CD4-positive, alpha-beta T cell (primary cell): ENCODE measurements at regions of chr12 and their contacts with region 1.

Region 1: DNA sequence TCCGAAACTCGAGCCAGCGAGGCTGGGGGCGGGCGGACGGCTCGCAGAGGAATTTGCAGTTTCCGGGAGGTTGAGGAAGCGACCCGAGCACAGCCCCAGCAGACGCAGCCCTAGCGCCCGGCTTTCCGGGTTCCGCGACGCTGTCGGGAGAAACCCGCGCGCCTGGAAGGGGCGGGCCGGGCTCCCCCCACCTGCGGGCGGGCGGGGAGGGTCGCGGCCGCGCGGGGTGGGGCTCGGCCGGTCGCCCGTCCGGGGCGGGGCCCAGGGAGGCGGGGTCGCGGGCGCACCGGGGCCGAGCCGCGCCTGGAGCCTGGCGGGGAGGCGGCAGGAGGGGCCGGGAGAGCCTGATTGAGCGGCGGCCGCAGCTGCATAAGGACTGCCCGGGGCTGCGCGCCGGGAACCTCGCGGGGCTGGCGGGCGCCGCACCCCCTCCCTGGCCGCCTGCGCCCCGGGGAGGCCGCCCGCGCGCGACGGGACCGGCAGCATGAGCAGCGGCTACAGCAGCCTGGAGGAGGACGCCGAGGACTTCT is at the start of gene RASSF3:
- DNase-seq: peak; percentile 46 to 92 (median 76)
- ATAC-seq: peak; percentile 57
- H3K4me3 ChIP-seq: peak within 1 kb of the TSS; percentile 87
- H3K4me3 Mint-ChIP-seq: peak within 1 kb of the TSS; percentile 98
- H3K27ac ChIP-seq: peak within 1 kb of the TSS; percentile 69 to 86
- H3K27ac Mint-ChIP-seq: peak within 1 kb of the TSS; percentile 93
- H3K4me1 ChIP-seq: peaks cover 38% of the 10 kb centered on the region
- H3K4me1 Mint-ChIP-seq: peaks cover 44% of the 10 kb centered on the region
- H3K27me3 ChIP-seq: no peaks in the 10 kb centered on the region
- H3K27me3 Mint-ChIP-seq: no peaks in the 10 kb centered on the region
- CTCF ChIP-seq: no peak
- total RNA-seq, gene RASSF3: 118 to 127 TPM

Region 2: DNA sequence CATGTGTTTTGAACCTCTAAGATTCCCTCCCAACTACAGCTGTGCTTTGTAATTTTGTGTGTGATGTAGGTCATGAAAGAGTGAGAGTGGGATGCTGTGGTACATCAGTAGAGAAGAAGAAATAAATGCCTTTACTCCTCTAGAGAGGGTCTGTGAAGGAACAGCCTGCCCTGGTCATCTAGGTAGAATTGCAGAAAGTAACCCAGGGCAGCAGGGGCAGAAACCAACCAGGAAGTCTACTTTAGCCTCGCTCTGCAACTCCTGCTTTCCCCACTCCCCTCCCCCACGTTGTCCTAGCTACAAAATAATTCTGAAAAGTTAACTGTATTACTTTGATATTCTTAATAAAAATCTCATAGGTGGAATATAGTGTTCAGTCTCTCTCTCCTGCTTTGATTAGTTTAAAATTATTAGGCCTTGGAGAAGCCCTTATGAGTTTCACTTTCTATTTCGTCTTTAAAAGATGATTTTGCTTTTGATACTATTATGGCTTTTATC is 150.8 kb before region 1 on chr12:
- CTCF ChIA-PET with region 1: no interaction called
- POLR2A ChIA-PET with region 1: no interaction called
- intact Hi-C with region 1: loop called in 1 of 2 experiments (anchors 5 kb)
- DNase-seq: peak in 3 of 14 experiments; percentile 43 to 55 (median 54)
- ATAC-seq: peak; percentile 51
- H3K4me3 ChIP-seq: peak overlapping the region; percentile 59
- H3K4me3 Mint-ChIP-seq: peak overlapping the region; percentile 90
- H3K27ac ChIP-seq: peak overlapping the region; percentile 54 to 77
- H3K27ac Mint-ChIP-seq: peak overlapping the region; percentile 91
- H3K4me1 ChIP-seq: peaks cover 22% of the 10 kb centered on the region
- H3K4me1 Mint-ChIP-seq: peaks cover 44% of the 10 kb centered on the region
- H3K27me3 ChIP-seq: no peaks in the 10 kb centered on the region
- H3K27me3 Mint-ChIP-seq: no peaks in the 10 kb centered on the region
- CTCF ChIP-seq: no peak

Region 3: DNA sequence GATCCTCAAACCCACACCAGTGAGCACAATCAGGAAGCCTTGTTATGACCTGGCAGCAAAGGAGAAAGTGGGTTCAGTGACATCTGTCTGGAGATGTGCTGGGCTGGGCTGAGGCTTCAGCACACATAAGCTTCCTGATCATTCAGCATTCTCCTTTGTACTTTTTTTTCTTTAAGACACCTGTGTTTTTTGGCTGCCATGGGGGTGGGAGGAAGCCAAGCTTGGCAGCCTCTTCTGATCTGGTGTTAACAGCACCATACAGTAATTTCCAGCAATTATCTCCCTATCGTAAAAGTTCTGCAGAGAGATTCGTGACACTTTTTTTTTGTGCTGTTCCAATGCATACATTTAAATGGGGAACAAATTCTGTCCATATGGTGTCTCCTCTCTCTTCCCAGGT is 38.8 kb before region 1 on chr12:
- CTCF ChIA-PET with region 1: no interaction called
- POLR2A ChIA-PET with region 1: interaction called, 32 read pairs
- intact Hi-C with region 1: no loop called
- DNase-seq: peak in 7 of 14 experiments; percentile 4 to 46 (median 20)
- ATAC-seq: peak; percentile 88
- H3K4me3 ChIP-seq: no peak overlapping the region
- H3K4me3 Mint-ChIP-seq: no peak overlapping the region
- H3K27ac ChIP-seq: no peak overlapping the region
- H3K27ac Mint-ChIP-seq: peak overlapping the region; percentile 45
- H3K4me1 ChIP-seq: peaks cover 31% of the 10 kb centered on the region
- H3K4me1 Mint-ChIP-seq: peaks cover 58% of the 10 kb centered on the region
- H3K27me3 ChIP-seq: no peaks in the 10 kb centered on the region
- H3K27me3 Mint-ChIP-seq: no peaks in the 10 kb centered on the region
- CTCF ChIP-seq: no peak

Region 4: DNA sequence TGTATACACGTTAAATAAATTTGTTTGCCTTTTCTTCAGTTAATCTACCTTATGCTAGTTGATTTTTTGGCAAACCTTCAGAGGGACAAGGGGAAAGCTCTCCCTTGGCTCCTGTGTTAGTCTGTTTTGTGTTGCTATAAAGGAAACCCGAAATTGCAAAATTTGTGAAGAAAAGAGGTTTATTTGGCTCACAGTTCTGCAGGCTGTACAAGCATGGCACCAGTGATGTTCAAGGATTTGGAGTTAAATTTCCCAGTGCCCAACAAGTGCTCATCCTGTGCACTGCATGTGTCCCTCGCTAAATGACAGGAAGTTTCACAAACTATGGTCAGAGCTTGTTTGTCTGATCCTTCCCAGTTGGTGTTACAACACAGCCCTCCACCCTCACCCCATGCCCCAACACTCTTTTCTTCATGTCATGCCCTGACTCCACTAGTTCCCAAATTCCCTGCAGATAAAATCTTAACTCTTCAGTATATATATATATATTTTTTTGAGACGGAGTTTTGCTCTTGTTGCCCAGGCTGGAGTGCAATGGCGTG is 13.9 kb before region 1 on chr12:
- CTCF ChIA-PET with region 1: interaction called, 3 read pairs
- POLR2A ChIA-PET with region 1: interaction called, 23 read pairs
- intact Hi-C with region 1: loop called in 1 of 2 experiments (anchors 1 kb)
- DNase-seq: no peak
- ATAC-seq: no peak
- H3K4me3 ChIP-seq: no peak overlapping the region
- H3K4me3 Mint-ChIP-seq: no peak overlapping the region
- H3K27ac ChIP-seq: no peak overlapping the region
- H3K27ac Mint-ChIP-seq: no peak overlapping the region
- H3K4me1 ChIP-seq: peaks cover 31% of the 10 kb centered on the region
- H3K4me1 Mint-ChIP-seq: peaks cover 54% of the 10 kb centered on the region
- H3K27me3 ChIP-seq: no peaks in the 10 kb centered on the region
- H3K27me3 Mint-ChIP-seq: no peaks in the 10 kb centered on the region
- CTCF ChIP-seq: no peak

Region 5: GRCh38 chr12:64650762-64651161 is 40.5 kb after region 1 on chr12:
- CTCF ChIA-PET with region 1: interaction called, 3 read pairs
- POLR2A ChIA-PET with region 1: interaction called, 4 read pairs
- intact Hi-C with region 1: loop called in 1 of 2 experiments (anchors 5 kb)
- DNase-seq: no peak
- ATAC-seq: no peak
- H3K4me3 ChIP-seq: no peak overlapping the region
- H3K4me3 Mint-ChIP-seq: peak overlapping the region; percentile 48
- H3K27ac ChIP-seq: no peak overlapping the region
- H3K27ac Mint-ChIP-seq: peak overlapping the region; percentile 48
- H3K4me1 ChIP-seq: peaks cover 81% of the 10 kb centered on the region
- H3K4me1 Mint-ChIP-seq: peaks cover 79% of the 10 kb centered on the region
- H3K27me3 ChIP-seq: no peaks in the 10 kb centered on the region
- H3K27me3 Mint-ChIP-seq: no peaks in the 10 kb centered on the region
- CTCF ChIP-seq: no peak

Region 6: GRCh38 chr12:64679487-64679983 is 69.3 kb after region 1 on chr12:
- CTCF ChIA-PET with region 1: interaction called, 4 read pairs
- POLR2A ChIA-PET with region 1: interaction called, 137 read pairs
- intact Hi-C with region 1: no loop called
- DNase-seq: peak; percentile 53 to 90 (median 68)
- ATAC-seq: peak; percentile 66
- H3K4me3 ChIP-seq: peak overlapping the region; percentile 19
- H3K4me3 Mint-ChIP-seq: peak overlapping the region; percentile 59
- H3K27ac ChIP-seq: peak overlapping the region; percentile 80 to 91
- H3K27ac Mint-ChIP-seq: peak overlapping the region; percentile 98
- H3K4me1 ChIP-seq: peaks cover 99% of the 10 kb centered on the region
- H3K4me1 Mint-ChIP-seq: peaks cover 90% of the 10 kb centered on the region
- H3K27me3 ChIP-seq: no peaks in the 10 kb centered on the region
- H3K27me3 Mint-ChIP-seq: no peaks in the 10 kb centered on the region
- CTCF ChIP-seq: no peak

Region 7: GRCh38 chr12:64696080-64696741 is 86.0 kb after region 1 on chr12:
- CTCF ChIA-PET with region 1: interaction called, 50 read pairs
- POLR2A ChIA-PET with region 1: interaction called, 38 read pairs
- intact Hi-C with region 1: loop called (anchors 1 to 2 kb)
- DNase-seq: peak in 2 of 14 experiments; percentile 42 to 56
- ATAC-seq: no peak
- H3K4me3 ChIP-seq: no peak overlapping the region
- H3K4me3 Mint-ChIP-seq: no peak overlapping the region
- H3K27ac ChIP-seq: peak overlapping the region in 1 of 2 donors; percentile 29
- H3K27ac Mint-ChIP-seq: peak overlapping the region; percentile 85
- H3K4me1 ChIP-seq: peaks cover 70% of the 10 kb centered on the region
- H3K4me1 Mint-ChIP-seq: peaks cover 77% of the 10 kb centered on the region
- H3K27me3 ChIP-seq: no peaks in the 10 kb centered on the region
- H3K27me3 Mint-ChIP-seq: no peaks in the 10 kb centered on the region
- CTCF ChIP-seq: peak; percentile 24